ENCODE measurements at regions of chr1 and their contacts with region 1.

Region 1: DNA sequence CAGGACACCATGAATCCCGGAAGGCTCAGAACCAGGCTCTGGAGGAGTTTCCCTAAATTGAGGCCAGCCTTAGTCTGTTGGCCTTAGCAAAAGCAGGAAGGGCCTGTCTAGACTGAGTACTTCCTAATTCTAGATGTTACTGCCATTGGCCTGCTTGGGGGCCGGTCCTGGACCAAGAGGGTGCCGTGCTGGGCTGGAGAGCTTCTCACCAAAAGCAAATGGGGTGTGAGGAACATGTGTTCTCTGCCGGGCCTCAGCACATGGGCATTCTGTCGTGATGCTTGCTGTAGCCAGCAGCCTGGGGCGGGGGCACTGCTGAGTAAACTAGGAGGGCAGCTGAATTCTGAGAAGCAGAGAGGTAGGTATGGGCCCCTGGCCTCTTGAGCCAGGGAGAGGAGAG is 35.7 kb upstream of the MAN1C1 start:
- DNase-seq: no peak
- ATAC-seq: no peak
- H3K4me3 ChIP-seq: no peak overlapping the region
- H3K27ac ChIP-seq: no peak overlapping the region
- H3K4me1 ChIP-seq: peaks cover 4% of the 10 kb centered on the region; the same call in 1 of the 2 replicates
- H3K27me3 ChIP-seq: peaks cover 3% of the 10 kb centered on the region
- CTCF ChIP-seq: no peak
- POLR2A ChIP-seq: no peak
- RAD21 ChIP-seq: no peak

Region 2: GRCh38 chr1:25140073-25140797 is 440.7 kb before region 1 on chr1:
- CTCF ChIA-PET with region 1: no interaction called
- POLR2A ChIA-PET with region 1: no interaction called
- dilution Hi-C with region 1: no loop called
- in situ Hi-C with region 1: no loop called
- intact Hi-C with region 1: no loop called
- DNase-seq: no peak
- ATAC-seq: no peak
- H3K4me3 ChIP-seq: no peak overlapping the region
- H3K27ac ChIP-seq: no peak overlapping the region
- H3K4me1 ChIP-seq: no peaks in the 10 kb centered on the region
- H3K27me3 ChIP-seq: peaks cover 70% of the 10 kb centered on the region
- CTCF ChIP-seq: no peak
- POLR2A ChIP-seq: no peak
- RAD21 ChIP-seq: no peak

Region 3: GRCh38 chr1:25239681-25240541 is 341.0 kb before region 1 on chr1:
- CTCF ChIA-PET with region 1: no interaction called
- POLR2A ChIA-PET with region 1: interaction called, 19 read pairs
- dilution Hi-C with region 1: no loop called
- in situ Hi-C with region 1: no loop called
- intact Hi-C with region 1: no loop called
- DNase-seq: peak; percentile 87
- ATAC-seq: peak; percentile 90
- H3K4me3 ChIP-seq: peak overlapping the region; percentile 56
- H3K27ac ChIP-seq: peak overlapping the region; percentile 87
- H3K4me1 ChIP-seq: peaks cover 4% of the 10 kb centered on the region; the same call in 1 of the 2 replicates
- H3K27me3 ChIP-seq: no peaks in the 10 kb centered on the region
- CTCF ChIP-seq: peak; percentile 71
- POLR2A ChIP-seq: peak; percentile 59
- RAD21 ChIP-seq: peak; percentile 70

Region 4: DNA sequence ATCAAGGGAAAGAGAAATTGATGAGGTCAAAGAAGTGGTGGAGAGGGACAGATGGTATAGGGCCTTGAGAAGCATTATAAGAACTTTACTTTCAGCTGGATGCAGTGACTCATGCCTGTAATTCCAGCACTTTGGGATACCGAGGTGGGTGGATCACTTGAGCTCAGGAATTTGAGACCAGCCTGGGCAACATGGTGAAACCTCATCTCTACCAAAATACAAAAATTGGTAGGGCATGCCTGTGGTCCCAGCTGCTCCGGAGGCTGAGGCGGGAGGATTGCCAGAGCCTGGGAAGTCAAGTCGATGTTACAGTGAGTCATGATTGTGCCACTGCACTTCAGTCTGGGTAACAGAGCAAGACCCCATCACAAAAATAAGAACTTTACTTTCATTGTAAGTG is 237.1 kb before region 1 on chr1:
- CTCF ChIA-PET with region 1: no interaction called
- POLR2A ChIA-PET with region 1: no interaction called
- dilution Hi-C with region 1: no loop called
- in situ Hi-C with region 1: no loop called
- intact Hi-C with region 1: no loop called
- DNase-seq: peak; percentile 89
- ATAC-seq: peak; percentile 88
- H3K4me3 ChIP-seq: no peak overlapping the region
- H3K27ac ChIP-seq: peak overlapping the region; percentile 27; the same call in 1 of the 2 replicates
- H3K4me1 ChIP-seq: peaks cover 4% of the 10 kb centered on the region
- H3K27me3 ChIP-seq: no peaks in the 10 kb centered on the region
- CTCF ChIP-seq: no peak
- POLR2A ChIP-seq: no peak
- RAD21 ChIP-seq: no peak

Region 5: GRCh38 chr1:25360596-25361581 is 220.0 kb before region 1 on chr1:
- CTCF ChIA-PET with region 1: no interaction called
- POLR2A ChIA-PET with region 1: no interaction called
- dilution Hi-C with region 1: no loop called
- in situ Hi-C with region 1: no loop called
- intact Hi-C with region 1: no loop called
- DNase-seq: peak; percentile 87
- ATAC-seq: peak; percentile 72
- H3K4me3 ChIP-seq: no peak overlapping the region
- H3K27ac ChIP-seq: no peak overlapping the region
- H3K4me1 ChIP-seq: peaks cover 9% of the 10 kb centered on the region
- H3K27me3 ChIP-seq: no peaks in the 10 kb centered on the region
- CTCF ChIP-seq: no peak
- POLR2A ChIP-seq: no peak
- RAD21 ChIP-seq: 0 out of 2 replicates have a peak, but pooled peaks have one; percentile 7

Region 6: DNA sequence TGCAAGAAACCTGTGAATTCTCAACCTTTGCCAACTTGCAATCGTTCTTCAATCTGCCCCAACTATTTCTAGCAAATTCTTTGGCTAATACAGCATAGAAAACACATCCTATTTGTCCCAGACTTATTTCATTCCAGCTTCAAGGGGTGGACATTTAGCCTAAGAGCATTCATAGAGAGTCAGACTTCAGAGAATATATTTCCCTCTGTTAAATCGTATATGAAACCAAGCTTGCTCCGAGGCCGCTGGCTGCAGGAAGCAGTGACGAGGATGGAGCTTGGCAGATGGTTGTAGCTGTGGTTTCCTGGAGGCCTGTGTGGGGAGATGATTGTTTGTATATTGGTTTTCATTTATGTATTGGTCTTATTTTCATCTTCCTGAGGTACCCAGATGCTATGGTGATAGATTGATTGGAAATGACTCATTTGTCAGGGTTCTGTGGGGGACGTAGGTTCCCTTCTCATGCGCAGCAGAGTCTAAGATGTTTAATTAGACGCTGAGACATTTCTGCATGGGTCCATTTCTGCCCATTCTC is 61.7 kb after region 1 on chr1:
- CTCF ChIA-PET with region 1: no interaction called
- POLR2A ChIA-PET with region 1: no interaction called
- dilution Hi-C with region 1: no loop called
- in situ Hi-C with region 1: no loop called
- intact Hi-C with region 1: no loop called
- DNase-seq: peak; percentile 70
- ATAC-seq: peak; percentile 50; the same call in 1 of the 2 replicates
- H3K4me3 ChIP-seq: no peak overlapping the region
- H3K27ac ChIP-seq: no peak overlapping the region; the same call in 1 of the 2 replicates
- H3K4me1 ChIP-seq: peaks cover 6% of the 10 kb centered on the region; the same call in 1 of the 2 replicates
- H3K27me3 ChIP-seq: no peaks in the 10 kb centered on the region
- CTCF ChIP-seq: no peak
- POLR2A ChIP-seq: no peak
- RAD21 ChIP-seq: no peak

Measured in IMR-90 (cell line).